PC-3 (cell line): ENCODE measurements at regions of chr5 and their contacts with region 1.

Region 1: DNA sequence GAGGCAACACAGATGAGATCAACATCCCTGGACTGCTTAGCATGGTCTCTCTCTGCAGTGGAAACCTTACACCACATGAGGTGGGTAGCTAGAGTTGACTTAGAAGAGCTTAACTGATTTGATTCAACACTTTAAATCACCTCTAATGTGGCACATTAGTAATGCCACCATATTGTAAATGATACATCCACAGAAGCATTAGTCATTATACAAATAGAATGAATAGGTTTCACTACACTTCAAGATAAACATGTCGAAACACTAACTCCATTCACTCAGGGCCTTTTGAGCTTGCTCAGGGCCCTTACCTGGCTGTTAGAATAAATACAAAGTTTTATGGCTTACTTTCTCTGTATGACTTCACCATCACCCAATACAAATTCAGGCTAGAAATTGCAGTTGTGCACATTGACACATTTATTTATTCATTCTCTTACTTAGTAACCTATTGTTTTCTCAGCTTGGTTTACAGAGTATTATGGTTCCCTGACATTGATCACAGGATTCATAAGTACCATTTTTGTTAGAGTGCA is 9.3 kb upstream of the SMAD5 start:
- DNase-seq: peak; percentile 90
- ATAC-seq: peak; percentile 94
- H3K4me3 ChIP-seq: peak overlapping the region; percentile 22; the same call in 1 of the 2 replicates
- H3K27ac ChIP-seq: peak overlapping the region; percentile 100
- H3K4me1 ChIP-seq: peaks cover 29% of the 10 kb centered on the region
- H3K27me3 ChIP-seq: no peaks in the 10 kb centered on the region
- CTCF ChIP-seq: no peak

Region 2: GRCh38 chr5:136011414-136012001 is 111.8 kb before region 1 on chr5:
- CTCF ChIA-PET with region 1: no interaction called
- POLR2A ChIA-PET with region 1: no interaction called
- intact Hi-C with region 1: loop called (anchors 1 kb)
- DNase-seq: peak; percentile 89
- ATAC-seq: peak; percentile 73
- H3K4me3 ChIP-seq: no peak overlapping the region
- H3K27ac ChIP-seq: no peak overlapping the region
- H3K4me1 ChIP-seq: peaks cover 38% of the 10 kb centered on the region
- H3K27me3 ChIP-seq: no peaks in the 10 kb centered on the region
- CTCF ChIP-seq: no peak

Region 3: GRCh38 chr5:136141561-136141960 is 18.3 kb after region 1 on chr5:
- CTCF ChIA-PET with region 1: no interaction called
- POLR2A ChIA-PET with region 1: interaction called, 10 read pairs
- intact Hi-C with region 1: no loop called
- DNase-seq: peak; percentile 13
- ATAC-seq: peak; percentile 37
- H3K4me3 ChIP-seq: no peak overlapping the region
- H3K27ac ChIP-seq: no peak overlapping the region
- H3K4me1 ChIP-seq: peaks cover 22% of the 10 kb centered on the region
- H3K27me3 ChIP-seq: no peaks in the 10 kb centered on the region
- CTCF ChIP-seq: no peak

Region 4: GRCh38 chr5:136174021-136174659 is 50.8 kb after region 1 on chr5:
- CTCF ChIA-PET with region 1: no interaction called
- POLR2A ChIA-PET with region 1: no interaction called
- intact Hi-C with region 1: loop called (anchors 5 kb)
- DNase-seq: peak; percentile 50
- ATAC-seq: peak; percentile 79
- H3K4me3 ChIP-seq: no peak overlapping the region
- H3K27ac ChIP-seq: no peak overlapping the region
- H3K4me1 ChIP-seq: no peaks in the 10 kb centered on the region
- H3K27me3 ChIP-seq: no peaks in the 10 kb centered on the region
- CTCF ChIP-seq: peak; percentile 75

Region 5: GRCh38 chr5:136382791-136383190 is 259.5 kb after region 1 on chr5:
- CTCF ChIA-PET with region 1: no interaction called
- POLR2A ChIA-PET with region 1: no interaction called
- intact Hi-C with region 1: no loop called
- DNase-seq: no peak
- ATAC-seq: no peak
- H3K4me3 ChIP-seq: no peak overlapping the region
- H3K27ac ChIP-seq: no peak overlapping the region
- H3K4me1 ChIP-seq: no peaks in the 10 kb centered on the region
- H3K27me3 ChIP-seq: no peaks in the 10 kb centered on the region
- CTCF ChIP-seq: no peak